HCT116 (cell line): ENCODE measurements at regions of chr7 and their contacts with region 1.

Region 1: GRCh38 chr7:17769918-17770317 is 170.4 kb downstream of the SNX13 start:
- DNase-seq: peak; percentile 59
- ATAC-seq: peak; percentile 91
- H3K4me3 ChIP-seq: no peak overlapping the region
- H3K27ac ChIP-seq: no peak overlapping the region
- H3K4me1 ChIP-seq: no peaks in the 10 kb centered on the region
- H3K27me3 ChIP-seq: no peaks in the 10 kb centered on the region
- CTCF ChIP-seq: peak; percentile 75 to 89 (median 76)
- POLR2A ChIP-seq: no peak
- RAD21 ChIP-seq: peak; percentile 89

Region 2: GRCh38 chr7:17706734-17707133 is 63.2 kb before region 1 on chr7:
- CTCF ChIA-PET with region 1: interaction called, 19 read pairs
- POLR2A ChIA-PET with region 1: no interaction called
- RAD21 ChIA-PET with region 1: interaction called in 1 of 2 experiments, 3 read pairs
- intact Hi-C with region 1: no loop called
- DNase-seq: peak; percentile 65
- ATAC-seq: peak; percentile 98
- H3K4me3 ChIP-seq: no peak overlapping the region
- H3K27ac ChIP-seq: no peak overlapping the region
- H3K4me1 ChIP-seq: no peaks in the 10 kb centered on the region
- H3K27me3 ChIP-seq: no peaks in the 10 kb centered on the region
- CTCF ChIP-seq: peak; percentile 53 to 71 (median 55)
- POLR2A ChIP-seq: no peak
- RAD21 ChIP-seq: peak; percentile 86

Region 3: DNA sequence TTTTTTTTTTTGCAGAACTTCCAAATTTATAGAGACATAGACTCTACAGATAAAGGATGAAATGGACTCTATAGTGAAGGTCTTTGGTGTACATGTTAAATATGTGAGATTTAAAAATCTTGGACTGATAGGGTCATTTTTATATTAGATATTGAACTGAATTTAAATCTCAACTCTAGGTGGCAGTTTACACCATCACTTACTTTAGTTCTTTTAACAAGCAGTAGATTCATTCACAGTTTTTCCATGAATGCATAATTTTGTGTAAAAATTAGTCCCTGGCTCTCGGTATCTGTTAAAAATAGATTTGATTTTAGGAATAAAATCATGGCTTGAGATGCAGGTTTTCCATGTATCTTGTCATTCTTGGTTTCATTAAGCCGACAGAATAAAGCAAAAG is 201.5 kb after region 1 on chr7:
- CTCF ChIA-PET with region 1: interaction called, 11 read pairs
- POLR2A ChIA-PET with region 1: no interaction called
- RAD21 ChIA-PET with region 1: no interaction called
- intact Hi-C with region 1: no loop called
- DNase-seq: no peak
- ATAC-seq: no peak
- H3K4me3 ChIP-seq: no peak overlapping the region
- H3K27ac ChIP-seq: no peak overlapping the region
- H3K4me1 ChIP-seq: no peaks in the 10 kb centered on the region
- H3K27me3 ChIP-seq: no peaks in the 10 kb centered on the region
- CTCF ChIP-seq: peak in 2 of 3 experiments; percentile 12 to 23; a peak in 1 of 6 replicates
- POLR2A ChIP-seq: no peak
- RAD21 ChIP-seq: peak; percentile 56

Region 4: DNA sequence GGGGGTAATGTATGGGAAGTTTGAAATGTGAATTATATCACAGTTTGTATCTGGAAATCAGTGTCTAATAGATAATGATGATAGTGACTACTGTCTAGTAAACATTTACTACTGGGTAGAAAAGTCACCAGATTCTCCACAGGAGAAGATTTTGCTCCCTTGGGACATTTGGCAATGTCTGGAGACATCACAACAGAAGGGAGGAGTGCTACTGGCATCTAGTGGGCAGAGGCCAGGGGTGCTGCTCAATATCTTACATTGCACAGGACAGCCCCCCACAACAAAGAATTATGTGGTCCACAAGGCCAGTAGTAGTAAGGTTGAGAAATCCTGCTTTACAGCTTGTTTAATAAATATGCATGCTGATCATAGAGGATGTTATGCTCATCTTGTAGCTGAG is 350.1 kb after region 1 on chr7:
- CTCF ChIA-PET with region 1: interaction called, 9 read pairs
- POLR2A ChIA-PET with region 1: no interaction called
- RAD21 ChIA-PET with region 1: no interaction called
- intact Hi-C with region 1: loop called (anchors 1 kb)
- DNase-seq: peak; percentile 3
- ATAC-seq: peak; percentile 52; the same call in 1 of the 2 replicates
- H3K4me3 ChIP-seq: no peak overlapping the region
- H3K27ac ChIP-seq: no peak overlapping the region
- H3K4me1 ChIP-seq: no peaks in the 10 kb centered on the region
- H3K27me3 ChIP-seq: no peaks in the 10 kb centered on the region
- CTCF ChIP-seq: peak; percentile 35 to 51 (median 41); a peak in 4 of 6 replicates
- POLR2A ChIP-seq: no peak
- RAD21 ChIP-seq: peak; percentile 59

Region 5: GRCh38 chr7:18320971-18321567 is 551.2 kb after region 1 on chr7:
- CTCF ChIA-PET with region 1: interaction called, 8 read pairs
- POLR2A ChIA-PET with region 1: no interaction called
- RAD21 ChIA-PET with region 1: interaction called in 1 of 2 experiments, 3 read pairs
- intact Hi-C with region 1: loop called (anchors 5 kb)
- DNase-seq: peak; percentile 43
- ATAC-seq: peak; percentile 67
- H3K4me3 ChIP-seq: no peak overlapping the region
- H3K27ac ChIP-seq: no peak overlapping the region
- H3K4me1 ChIP-seq: no peaks in the 10 kb centered on the region
- H3K27me3 ChIP-seq: no peaks in the 10 kb centered on the region
- CTCF ChIP-seq: peak; percentile 44 to 62 (median 45); a peak in 5 of 6 replicates
- POLR2A ChIP-seq: no peak
- RAD21 ChIP-seq: peak; percentile 48

Region 6: DNA sequence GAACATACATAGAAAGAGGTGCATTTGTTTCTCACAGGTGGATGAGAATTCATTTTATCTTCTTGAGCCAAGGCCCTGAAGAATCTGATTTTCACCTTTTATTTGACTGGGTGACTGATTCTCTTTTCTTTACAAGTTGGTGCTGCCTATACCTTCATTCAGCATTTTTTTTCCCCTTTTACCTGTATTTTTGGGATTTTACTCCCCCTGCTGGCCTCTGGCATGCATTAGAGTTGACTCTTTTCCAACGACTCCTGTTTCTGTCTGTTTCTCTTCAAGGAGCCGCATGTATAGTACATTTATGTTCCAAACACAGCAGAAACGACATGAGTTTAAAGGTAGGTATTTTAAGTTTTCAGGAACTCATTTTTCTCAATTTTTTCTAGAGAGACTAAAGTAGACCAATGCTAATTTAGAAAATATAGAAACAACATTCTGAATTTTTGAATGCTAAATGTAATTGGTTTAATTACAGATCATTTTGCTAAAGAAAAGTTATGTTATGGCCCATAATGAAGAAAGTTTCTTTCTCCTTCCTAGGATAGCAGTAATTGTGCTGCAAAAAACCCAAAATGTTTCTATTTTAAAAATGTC is 575.8 kb after region 1 on chr7:
- CTCF ChIA-PET with region 1: interaction called, 50 read pairs
- POLR2A ChIA-PET with region 1: interaction called, 3 read pairs
- RAD21 ChIA-PET with region 1: interaction called, 5 to 7 read pairs
- intact Hi-C with region 1: loop called (anchors 1 kb)
- DNase-seq: peak; percentile 46
- ATAC-seq: peak; percentile 69
- H3K4me3 ChIP-seq: no peak overlapping the region
- H3K27ac ChIP-seq: no peak overlapping the region
- H3K4me1 ChIP-seq: no peaks in the 10 kb centered on the region; a peak in 1 of 4 replicates
- H3K27me3 ChIP-seq: no peaks in the 10 kb centered on the region
- CTCF ChIP-seq: peak; percentile 78 to 81 (median 78)
- POLR2A ChIP-seq: no peak
- RAD21 ChIP-seq: peak; percentile 82